Ascending aorta (tissue), 2 donors: ENCODE measurements at regions of chrX and their contacts with region 1.

Region 1: DNA sequence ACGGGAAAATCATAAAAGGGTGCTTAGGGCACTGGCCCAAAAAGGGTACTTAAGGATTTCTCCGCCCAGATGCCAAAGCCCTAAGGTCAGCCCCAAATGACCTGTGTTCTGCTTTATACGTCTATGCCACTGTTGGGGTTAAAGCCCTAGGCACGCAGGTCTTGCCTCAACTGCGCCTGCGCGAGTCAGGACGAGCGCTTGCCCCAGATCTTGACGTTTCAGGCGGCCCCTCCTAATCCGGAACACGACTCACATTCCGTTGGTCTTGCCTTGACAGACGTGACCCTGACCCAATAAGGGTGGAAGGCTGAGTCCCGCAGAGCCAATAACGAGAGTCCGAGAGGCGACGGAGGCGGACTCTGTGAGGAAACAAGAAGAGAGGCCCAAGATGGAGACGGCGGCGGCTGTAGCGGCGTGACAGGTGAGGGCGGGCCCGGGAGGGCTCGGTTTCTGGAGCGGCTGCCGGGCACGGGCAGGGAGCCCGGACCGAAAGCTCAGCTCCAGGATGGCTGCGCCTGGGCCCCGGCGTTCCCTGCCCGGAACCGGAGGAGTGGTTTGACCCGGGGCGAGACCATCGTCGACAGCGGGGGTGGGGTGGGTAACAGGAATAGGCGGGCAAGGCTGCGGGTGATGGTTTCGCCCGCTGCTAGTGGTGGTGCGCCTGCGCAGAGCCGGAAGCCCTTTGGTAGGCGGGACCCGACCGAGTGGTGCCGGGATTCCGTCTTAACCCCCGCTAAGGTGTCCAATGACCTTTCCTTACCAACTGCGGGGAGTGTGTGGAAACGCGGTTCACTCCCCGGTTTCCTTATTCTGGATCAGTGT is at the start of gene ARAF:
- DNase-seq: peak; percentile 95 to 98
- H3K4me3 ChIP-seq: peak within 1 kb of the TSS; percentile 53 to 63
- H3K27ac ChIP-seq: peak within 1 kb of the TSS; percentile 85 to 95
- H3K4me1 ChIP-seq: peaks cover 0 to 6% of the 10 kb centered on the region in 2 donors
- H3K27me3 ChIP-seq: no peaks in the 10 kb centered on the region
- CTCF ChIP-seq: no peak
- total RNA-seq, gene ARAF: 56.1 TPM

Region 2: GRCh38 chrX:46268429-46268828 is 1292.6 kb before region 1 on chrX:
- intact Hi-C with region 1: no loop called
- DNase-seq: no peak
- H3K4me3 ChIP-seq: no peak overlapping the region
- H3K27ac ChIP-seq: no peak overlapping the region
- H3K4me1 ChIP-seq: no peaks in the 10 kb centered on the region
- H3K27me3 ChIP-seq: no peaks in the 10 kb centered on the region
- CTCF ChIP-seq: no peak

Region 3: DNA sequence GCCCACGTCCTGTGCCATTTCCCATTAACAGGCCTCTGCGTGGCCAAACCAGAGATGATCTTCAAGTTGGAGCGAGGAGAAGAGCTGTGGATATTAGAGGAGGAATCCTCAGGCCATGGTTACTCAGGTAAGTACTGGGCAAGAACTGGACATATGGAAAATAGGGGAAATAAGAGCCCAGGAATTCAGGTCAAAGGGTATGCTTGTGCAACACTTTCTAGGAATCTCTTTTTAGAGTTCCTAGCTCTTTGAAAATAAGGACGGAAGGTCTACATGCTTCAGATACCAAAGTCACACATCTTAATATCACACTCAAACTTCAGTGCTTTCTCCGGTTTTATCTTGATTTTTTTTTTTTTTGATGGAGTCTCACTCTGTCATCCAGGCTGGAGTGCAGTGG is 150.4 kb before region 1 on chrX:
- intact Hi-C with region 1: no loop called
- DNase-seq: no peak
- H3K4me3 ChIP-seq: no peak overlapping the region
- H3K27ac ChIP-seq: no peak overlapping the region
- H3K4me1 ChIP-seq: no peaks in the 10 kb centered on the region
- H3K27me3 ChIP-seq: no peaks in the 10 kb centered on the region
- CTCF ChIP-seq: no peak

Region 4: DNA sequence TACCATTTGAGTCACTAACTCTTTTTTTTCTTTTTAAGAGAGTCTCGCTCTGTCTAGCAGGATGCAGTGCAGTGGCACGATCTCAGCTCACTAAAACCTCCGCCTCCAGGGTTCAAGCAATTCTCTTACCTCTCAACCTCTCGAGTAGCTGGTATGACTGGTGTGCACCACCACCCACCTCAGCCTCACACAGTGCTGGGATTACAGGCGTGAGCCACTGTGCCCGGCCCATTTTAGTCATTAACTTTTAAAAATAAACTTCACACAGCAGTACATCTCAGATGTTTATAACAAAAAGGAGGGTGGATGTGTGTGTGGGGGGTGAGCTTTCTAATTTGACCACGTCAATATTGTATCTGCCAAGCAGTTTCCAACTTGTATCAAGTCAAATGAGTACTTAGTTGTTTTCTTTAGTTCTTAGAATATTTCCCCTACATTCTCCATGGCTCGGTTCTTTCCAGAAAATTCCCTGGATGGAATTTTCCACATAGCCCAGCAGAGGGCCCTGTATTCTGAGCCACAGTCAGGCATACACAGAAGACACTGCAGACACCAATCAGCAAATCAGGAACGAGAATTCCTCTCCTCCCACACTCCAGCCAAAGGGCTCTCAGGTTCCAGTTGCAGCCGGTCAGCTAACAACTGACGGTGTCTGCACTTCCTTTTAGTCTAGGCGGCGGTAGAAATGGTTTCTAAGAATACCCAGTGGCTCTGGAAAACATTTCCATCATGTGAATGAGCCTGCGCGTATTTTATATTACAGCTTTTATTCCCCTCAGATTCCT is 20.1 kb before region 1 on chrX:
- intact Hi-C with region 1: loop called (anchors 1 kb)
- DNase-seq: peak; percentile 54 to 90
- H3K4me3 ChIP-seq: no peak overlapping the region
- H3K27ac ChIP-seq: peak overlapping the region; percentile 82 to 88
- H3K4me1 ChIP-seq: peaks cover 0 to 6% of the 10 kb centered on the region in 2 donors
- H3K27me3 ChIP-seq: no peaks in the 10 kb centered on the region
- CTCF ChIP-seq: peak; percentile 38 to 44 (median 41)

Region 5: DNA sequence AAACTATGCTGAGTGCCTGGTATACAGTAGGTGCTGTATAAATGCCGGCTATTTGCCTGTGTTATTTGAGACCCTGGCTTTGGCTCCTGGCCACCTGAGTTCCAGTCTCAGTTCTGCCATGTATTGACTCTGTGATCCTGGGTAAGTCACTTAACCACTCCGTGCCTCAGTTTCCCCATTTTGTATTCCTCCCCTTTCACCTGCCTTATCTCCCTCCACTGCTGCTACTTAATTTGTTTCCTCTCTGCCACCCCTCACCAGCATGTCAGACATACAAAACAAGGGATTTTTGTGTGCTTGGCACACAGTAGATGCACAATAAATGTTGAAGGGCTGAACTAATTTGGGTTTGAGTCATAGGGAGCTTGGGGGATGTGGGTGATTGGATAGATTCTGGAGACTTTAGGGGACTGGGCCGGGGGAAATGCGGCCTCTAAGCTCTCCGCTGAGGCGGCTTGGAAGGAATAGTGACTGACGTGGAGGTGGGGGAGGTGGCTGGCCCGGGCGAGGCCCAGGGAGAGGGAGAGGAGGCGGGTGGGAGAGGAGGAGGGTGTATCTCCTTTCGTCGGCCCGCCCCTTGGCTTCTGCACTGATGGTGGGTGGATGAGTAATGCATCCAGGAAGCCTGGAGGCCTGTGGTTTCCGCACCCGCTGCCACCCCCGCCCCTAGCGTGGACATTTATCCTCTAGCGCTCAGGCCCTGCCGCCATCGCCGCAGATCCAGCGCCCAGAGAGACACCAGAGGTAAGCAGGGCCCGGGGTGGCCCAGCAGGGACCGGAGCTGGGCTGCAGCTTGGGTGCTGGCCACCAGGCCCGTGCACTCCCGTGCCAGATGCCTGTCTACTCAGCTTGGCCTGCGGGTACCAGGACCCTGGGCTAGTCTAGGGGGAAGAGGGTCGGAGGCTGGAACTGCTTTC is 20.9 kb after region 1 on chrX and contains the start of gene TIMP1:
- intact Hi-C with region 1: loop called (anchors 1 kb)
- DNase-seq: peak; percentile 86 to 96
- H3K4me3 ChIP-seq: peak within 1 kb of the TSS; percentile 60 to 70
- H3K27ac ChIP-seq: peak within 1 kb of the TSS; percentile 85 to 90
- H3K4me1 ChIP-seq: peaks cover 0 to 6% of the 10 kb centered on the region in 2 donors
- H3K27me3 ChIP-seq: no peaks in the 10 kb centered on the region
- CTCF ChIP-seq: no peak
- total RNA-seq, gene TIMP1: 1,308 TPM

Region 6: DNA sequence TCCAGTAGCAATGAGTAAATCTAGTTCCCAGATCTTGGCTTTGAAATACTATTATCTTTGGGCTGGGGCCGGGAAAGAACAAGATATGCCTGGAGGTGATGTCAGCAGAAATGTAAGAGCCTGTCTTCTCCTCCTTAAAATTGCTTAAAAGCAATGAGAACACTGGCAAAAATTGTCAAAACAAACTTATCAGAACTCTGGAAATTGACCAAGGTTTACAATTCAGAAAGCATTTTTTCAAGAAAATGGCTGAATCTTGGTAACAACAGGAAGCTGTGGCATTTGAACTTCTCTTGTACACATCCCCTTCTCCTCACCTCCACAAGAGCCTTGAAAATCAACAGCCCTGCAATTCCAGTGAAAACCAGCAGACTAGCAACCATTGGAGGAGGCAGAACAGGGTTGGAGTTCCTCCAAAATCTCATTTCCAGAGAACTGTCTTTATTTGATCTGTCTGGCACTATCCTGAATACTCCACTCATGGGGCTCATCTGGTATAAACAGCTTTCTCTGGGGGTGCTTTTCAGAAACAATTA is 34.7 kb after region 1 on chrX:
- intact Hi-C with region 1: loop called (anchors 1 kb)
- DNase-seq: no peak
- H3K4me3 ChIP-seq: no peak overlapping the region
- H3K27ac ChIP-seq: peak overlapping the region; percentile 20 to 31
- H3K4me1 ChIP-seq: peaks cover 0 to 2% of the 10 kb centered on the region in 2 donors
- H3K27me3 ChIP-seq: no peaks in the 10 kb centered on the region
- CTCF ChIP-seq: no peak

Region 7: DNA sequence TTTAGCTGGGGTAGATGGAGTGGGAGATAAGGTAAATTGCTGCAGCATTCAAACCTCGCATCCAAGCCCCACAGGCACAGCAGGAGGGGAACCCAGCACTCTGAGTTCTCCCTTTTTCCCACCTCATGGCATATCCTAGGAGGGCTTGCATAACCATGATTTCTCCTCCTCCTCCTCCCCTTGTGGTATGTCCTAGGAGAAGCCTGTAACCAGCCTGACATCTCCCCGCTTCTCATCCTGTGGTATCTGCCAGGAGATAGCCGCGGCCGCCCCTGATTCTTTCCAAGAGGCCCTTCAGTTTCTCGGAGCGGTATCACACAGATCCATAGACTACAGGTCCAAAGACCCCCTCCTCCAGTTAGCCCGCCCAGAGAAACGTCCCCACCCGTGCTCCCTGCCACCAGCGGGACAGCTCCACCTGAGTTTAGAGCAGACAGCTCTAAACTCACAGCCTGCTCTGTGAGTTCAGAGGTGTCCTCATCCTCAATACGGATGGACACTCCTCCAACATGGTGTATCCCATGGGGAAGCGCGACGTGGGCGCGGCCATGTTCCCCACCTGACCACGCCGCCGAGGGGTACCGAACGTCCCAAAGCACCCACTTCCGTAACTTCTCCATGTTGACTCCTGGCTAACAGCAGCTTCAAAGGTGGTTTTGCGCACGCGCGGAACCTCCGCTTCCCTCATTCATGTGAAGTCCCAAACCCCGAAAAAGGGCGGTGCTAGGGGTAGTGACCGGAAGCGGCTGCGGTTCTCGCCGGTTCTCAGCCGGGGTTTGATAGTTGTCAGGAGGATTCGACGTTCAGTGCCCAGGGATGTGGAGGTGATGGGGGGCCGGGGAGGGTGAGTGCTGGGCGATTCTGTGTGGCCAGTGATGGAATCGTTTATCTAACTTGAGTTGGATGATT is 275.4 kb after region 1 on chrX and contains the start of gene ZNF81:
- intact Hi-C with region 1: loop called (anchors 10 kb)
- DNase-seq: peak; percentile 89 to 98
- H3K4me3 ChIP-seq: peak within 1 kb of the TSS; percentile 46 to 67
- H3K27ac ChIP-seq: peak within 1 kb of the TSS; percentile 44 to 48
- H3K4me1 ChIP-seq: no peaks in the 10 kb centered on the region
- H3K27me3 ChIP-seq: no peaks in the 10 kb centered on the region
- CTCF ChIP-seq: no peak
- total RNA-seq, gene ZNF81: 2.8 TPM